Mammary epithelial cell (primary cell): ENCODE measurements at regions of chr17 and their contacts with region 1.

Region 1: GRCh38 chr17:71118039-71118438 is 948.7 kb downstream of the KCNJ2 start:
- DNase-seq: peak; percentile 62
- H3K4me3 ChIP-seq: no peak overlapping the region
- H3K27ac ChIP-seq: peak overlapping the region; percentile 15
- H3K4me1 ChIP-seq: peaks cover 11% of the 10 kb centered on the region
- H3K27me3 ChIP-seq: no peaks in the 10 kb centered on the region
- CTCF ChIP-seq: peak; percentile 68 to 73

Region 2: GRCh38 chr17:71208111-71208704 is 90.2 kb after region 1 on chr17:
- CTCF ChIA-PET with region 1: no interaction called
- dilution Hi-C with region 1: no loop called
- in situ Hi-C with region 1: no loop called
- intact Hi-C with region 1: loop called (anchors 2 kb)
- DNase-seq: peak; percentile 100
- H3K4me3 ChIP-seq: no peak overlapping the region
- H3K27ac ChIP-seq: peak overlapping the region; percentile 99
- H3K4me1 ChIP-seq: peaks cover 14% of the 10 kb centered on the region
- H3K27me3 ChIP-seq: no peaks in the 10 kb centered on the region
- CTCF ChIP-seq: no peak

Region 3: GRCh38 chr17:71438631-71439146 is 320.6 kb after region 1 on chr17:
- CTCF ChIA-PET with region 1: no interaction called
- dilution Hi-C with region 1: no loop called
- in situ Hi-C with region 1: loop called in 1 of 2 experiments (anchors 25 kb)
- intact Hi-C with region 1: no loop called
- DNase-seq: peak; percentile 96
- H3K4me3 ChIP-seq: no peak overlapping the region
- H3K27ac ChIP-seq: peak overlapping the region; percentile 82
- H3K4me1 ChIP-seq: peaks cover 37% of the 10 kb centered on the region
- H3K27me3 ChIP-seq: no peaks in the 10 kb centered on the region
- CTCF ChIP-seq: no peak